HCT116 (cell line): ENCODE measurements at regions of chr1 and their contacts with region 1.

Region 1: GRCh38 chr1:145858894-145859490 is at the start of gene PIAS3:
- DNase-seq: peak; percentile 82
- ATAC-seq: peak; percentile 87
- H3K4me3 ChIP-seq: peak within 1 kb of the TSS; percentile 73 to 75
- H3K27ac ChIP-seq: peak within 1 kb of the TSS; percentile 71
- H3K4me1 ChIP-seq: peaks cover 11 to 15% of the 10 kb centered on the region in 2 experiments; a peak in 3 of 4 replicates
- H3K27me3 ChIP-seq: no peaks in the 10 kb centered on the region
- CTCF ChIP-seq: no peak
- POLR2A ChIP-seq: peak; percentile 13
- RAD21 ChIP-seq: no peak
- total RNA-seq, gene PIAS3: 31.2 TPM

Region 2: GRCh38 chr1:145751491-145752037 is 107.4 kb before region 1 on chr1:
- CTCF ChIA-PET with region 1: no interaction called
- POLR2A ChIA-PET with region 1: no interaction called
- RAD21 ChIA-PET with region 1: no interaction called
- intact Hi-C with region 1: no loop called
- DNase-seq: no peak
- ATAC-seq: no peak
- H3K4me3 ChIP-seq: no peak overlapping the region
- H3K27ac ChIP-seq: peak overlapping the region; percentile 25; the same call in 1 of the 2 replicates
- H3K4me1 ChIP-seq: peaks cover 0 to 5% of the 10 kb centered on the region in 2 experiments; a peak in 2 of 4 replicates
- H3K27me3 ChIP-seq: no peaks in the 10 kb centered on the region
- CTCF ChIP-seq: no peak
- POLR2A ChIP-seq: no peak
- RAD21 ChIP-seq: no peak

Region 3: GRCh38 chr1:145957443-145958319 is 98.7 kb after region 1 on chr1 and contains the start of gene LIX1L:
- CTCF ChIA-PET with region 1: no interaction called
- POLR2A ChIA-PET with region 1: interaction called, 12 read pairs
- RAD21 ChIA-PET with region 1: no interaction called
- intact Hi-C with region 1: no loop called
- DNase-seq: peak; percentile 90
- ATAC-seq: peak; percentile 96
- H3K4me3 ChIP-seq: peak within 1 kb of the TSS; percentile 59 to 67
- H3K27ac ChIP-seq: peak within 1 kb of the TSS; percentile 63
- H3K4me1 ChIP-seq: peaks cover 14 to 28% of the 10 kb centered on the region in 2 experiments
- H3K27me3 ChIP-seq: no peaks in the 10 kb centered on the region
- CTCF ChIP-seq: no peak
- POLR2A ChIP-seq: peak; percentile 58
- RAD21 ChIP-seq: no peak
- total RNA-seq, gene LIX1L: 12.4 TPM

Region 4: GRCh38 chr1:145996433-145997015 is 137.5 kb after region 1 on chr1 and contains the start of gene TXNIP:
- CTCF ChIA-PET with region 1: no interaction called
- POLR2A ChIA-PET with region 1: no interaction called
- RAD21 ChIA-PET with region 1: no interaction called
- intact Hi-C with region 1: no loop called
- DNase-seq: no peak
- ATAC-seq: no peak
- H3K4me3 ChIP-seq: no peak within 1 kb of the TSS
- H3K27ac ChIP-seq: no peak within 1 kb of the TSS
- H3K4me1 ChIP-seq: no peaks in the 10 kb centered on the region
- H3K27me3 ChIP-seq: no peaks in the 10 kb centered on the region
- CTCF ChIP-seq: no peak
- POLR2A ChIP-seq: no peak
- RAD21 ChIP-seq: no peak
- total RNA-seq, gene TXNIP: 2.5 TPM